ENCODE measurements at regions of chr18 and their contacts with region 1.

Region 1: GRCh38 chr18:46660955-46661749 is 4.1 kb upstream of the LOXHD1 start:
- DNase-seq: peak; percentile 67
- ATAC-seq: peak; percentile 62
- H3K4me3 Mint-ChIP-seq: no peak overlapping the region
- H3K27ac Mint-ChIP-seq: no peak overlapping the region
- H3K4me1 Mint-ChIP-seq: peaks cover 19% of the 10 kb centered on the region
- H3K27me3 Mint-ChIP-seq: peaks cover 7% of the 10 kb centered on the region
- CTCF ChIP-seq: no peak

Region 2: DNA sequence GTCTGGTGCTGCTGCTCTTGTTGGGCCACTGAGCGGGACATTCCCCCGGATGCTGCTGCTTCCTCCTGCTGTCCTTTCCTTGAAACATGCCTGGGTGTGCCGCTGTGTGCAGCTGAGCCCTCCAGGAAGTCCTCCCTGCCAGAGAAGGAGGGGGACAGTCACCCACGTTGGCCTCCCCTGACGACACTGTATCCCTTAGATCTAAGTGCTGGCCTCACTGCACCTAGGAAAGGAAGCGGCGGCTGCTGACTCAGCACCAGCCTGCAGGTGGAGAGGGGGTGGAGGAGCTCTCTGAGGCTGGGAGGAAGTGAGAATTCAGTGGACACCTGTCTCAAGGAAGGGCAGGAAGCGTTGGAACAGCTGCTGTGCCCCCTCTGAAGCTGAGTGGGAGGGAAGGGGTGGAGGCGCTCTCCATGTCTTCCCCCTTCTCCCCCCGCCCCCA is 317.2 kb before region 1 on chr18:
- CTCF ChIA-PET with region 1: interaction called, 12 read pairs
- POLR2A ChIA-PET with region 1: no interaction called
- DNase-seq: peak; percentile 52
- ATAC-seq: peak; percentile 84
- H3K4me3 Mint-ChIP-seq: no peak overlapping the region
- H3K27ac Mint-ChIP-seq: peak overlapping the region; percentile 53; the same call in 1 of the 2 replicates
- H3K4me1 Mint-ChIP-seq: peaks cover 44% of the 10 kb centered on the region
- H3K27me3 Mint-ChIP-seq: no peaks in the 10 kb centered on the region
- CTCF ChIP-seq: no peak

Region 3: DNA sequence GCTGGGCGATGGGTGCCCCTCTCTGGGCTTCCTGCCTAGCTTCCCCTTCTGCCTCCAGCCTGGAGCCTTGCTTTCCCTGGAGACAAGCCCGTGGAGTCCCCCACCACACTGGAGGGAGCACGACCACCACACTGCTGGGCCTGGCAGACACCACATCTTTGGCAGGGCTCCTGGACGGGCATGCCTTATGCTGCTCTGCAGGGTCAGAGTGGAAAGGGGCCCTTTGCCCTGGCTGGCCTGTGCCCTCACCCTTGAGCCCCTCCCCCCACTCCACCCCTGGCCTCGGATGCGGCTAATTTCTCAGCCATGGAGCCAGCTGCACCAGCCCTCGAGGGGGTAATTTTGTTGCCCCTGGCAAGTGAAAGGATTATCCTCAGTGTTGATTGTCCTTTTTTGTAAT is 198.6 kb before region 1 on chr18:
- CTCF ChIA-PET with region 1: interaction called, 20 read pairs
- POLR2A ChIA-PET with region 1: no interaction called
- DNase-seq: no peak
- ATAC-seq: no peak
- H3K4me3 Mint-ChIP-seq: no peak overlapping the region
- H3K27ac Mint-ChIP-seq: no peak overlapping the region
- H3K4me1 Mint-ChIP-seq: peaks cover 61% of the 10 kb centered on the region
- H3K27me3 Mint-ChIP-seq: peaks cover 4% of the 10 kb centered on the region; the same call in 1 of the 2 replicates
- CTCF ChIP-seq: no peak

Region 4: DNA sequence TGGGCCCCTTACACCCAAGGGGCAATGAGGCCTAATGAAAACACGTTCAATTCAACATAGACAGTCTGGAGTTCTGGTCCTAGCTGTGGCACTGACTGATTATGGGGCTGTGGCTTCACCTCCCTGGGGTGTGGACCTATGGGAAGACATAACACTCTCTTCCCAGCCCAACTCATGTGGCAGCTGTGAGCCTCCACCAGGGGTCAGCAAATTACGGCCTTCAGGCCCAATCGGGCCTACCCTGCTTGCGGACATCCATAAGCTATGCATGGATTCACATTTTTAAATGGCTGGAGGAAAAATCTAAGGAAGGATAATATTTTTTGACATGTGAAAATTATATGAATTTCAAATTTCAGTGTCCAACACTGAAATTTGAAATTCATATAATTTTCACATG is 105.4 kb before region 1 on chr18:
- CTCF ChIA-PET with region 1: interaction called, 206 read pairs
- POLR2A ChIA-PET with region 1: interaction called, 6 read pairs
- DNase-seq: peak; percentile 77
- ATAC-seq: peak; percentile 99
- H3K4me3 Mint-ChIP-seq: no peak overlapping the region
- H3K27ac Mint-ChIP-seq: no peak overlapping the region
- H3K4me1 Mint-ChIP-seq: no peaks in the 10 kb centered on the region
- H3K27me3 Mint-ChIP-seq: no peaks in the 10 kb centered on the region; the same call in 1 of the 2 replicates
- CTCF ChIP-seq: peak; percentile 66

Region 5: GRCh38 chr18:46632401-46633071 is 28.6 kb before region 1 on chr18:
- CTCF ChIA-PET with region 1: interaction called, 19 read pairs
- POLR2A ChIA-PET with region 1: no interaction called
- DNase-seq: no peak
- ATAC-seq: no peak
- H3K4me3 Mint-ChIP-seq: no peak overlapping the region
- H3K27ac Mint-ChIP-seq: no peak overlapping the region
- H3K4me1 Mint-ChIP-seq: no peaks in the 10 kb centered on the region
- H3K27me3 Mint-ChIP-seq: peaks cover 5% of the 10 kb centered on the region; the same call in 1 of the 2 replicates
- CTCF ChIP-seq: no peak

Region 6: DNA sequence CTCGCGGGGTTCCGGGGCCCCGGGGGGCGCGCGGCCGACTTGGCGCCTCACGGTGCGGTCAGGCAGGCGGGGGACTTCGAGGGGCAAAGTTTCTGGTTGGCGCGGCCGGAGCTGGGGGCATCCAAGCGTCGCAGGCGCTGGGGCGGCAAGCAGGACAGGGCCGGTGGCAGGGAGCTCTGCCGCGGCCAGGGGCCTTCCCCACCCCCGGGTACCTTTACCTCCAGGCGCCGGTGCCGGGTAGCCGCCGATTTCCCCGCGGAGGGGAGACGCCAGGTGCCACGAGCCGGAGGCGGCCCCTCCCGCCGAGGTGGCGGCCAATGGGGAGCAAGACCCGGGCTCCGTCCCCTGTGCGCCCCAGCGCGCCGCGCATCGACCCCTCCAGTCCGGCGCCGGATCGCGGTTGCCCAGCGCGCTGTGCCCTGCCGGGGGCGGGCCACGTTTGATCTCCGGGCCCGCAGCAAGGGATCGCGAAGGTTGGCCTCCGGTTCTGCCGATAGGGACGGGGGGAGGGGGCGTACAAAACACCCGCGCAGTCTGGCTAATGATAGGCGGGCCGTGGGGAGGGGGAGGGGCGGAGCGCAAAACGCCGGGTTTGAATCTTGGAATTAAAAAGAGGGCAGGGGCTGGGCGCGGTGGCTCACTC is 95.5 kb after region 1 on chr18 and contains the start of gene ST8SIA5:
- CTCF ChIA-PET with region 1: interaction called, 25 read pairs
- POLR2A ChIA-PET with region 1: no interaction called
- DNase-seq: peak; percentile 79
- ATAC-seq: peak; percentile 74
- H3K4me3 Mint-ChIP-seq: peak within 1 kb of the TSS; percentile 89
- H3K27ac Mint-ChIP-seq: no peak within 1 kb of the TSS
- H3K4me1 Mint-ChIP-seq: peaks cover 24% of the 10 kb centered on the region
- H3K27me3 Mint-ChIP-seq: peaks cover 59% of the 10 kb centered on the region
- CTCF ChIP-seq: no peak
- total RNA-seq, gene ST8SIA5: 2.8 to 5.4 TPM (median 3.1 TPM) in 3 replicates

Region 7: GRCh38 chr18:46891742-46892214 is 230.6 kb after region 1 on chr18:
- CTCF ChIA-PET with region 1: no interaction called
- POLR2A ChIA-PET with region 1: no interaction called
- DNase-seq: no peak
- ATAC-seq: no peak; the same call in 1 of the 2 replicates
- H3K4me3 Mint-ChIP-seq: no peak overlapping the region
- H3K27ac Mint-ChIP-seq: no peak overlapping the region
- H3K4me1 Mint-ChIP-seq: peaks cover 31% of the 10 kb centered on the region
- H3K27me3 Mint-ChIP-seq: no peaks in the 10 kb centered on the region
- CTCF ChIP-seq: no peak